ENCODE measurements at regions of chr1 and their contacts with region 1.

Region 1: DNA sequence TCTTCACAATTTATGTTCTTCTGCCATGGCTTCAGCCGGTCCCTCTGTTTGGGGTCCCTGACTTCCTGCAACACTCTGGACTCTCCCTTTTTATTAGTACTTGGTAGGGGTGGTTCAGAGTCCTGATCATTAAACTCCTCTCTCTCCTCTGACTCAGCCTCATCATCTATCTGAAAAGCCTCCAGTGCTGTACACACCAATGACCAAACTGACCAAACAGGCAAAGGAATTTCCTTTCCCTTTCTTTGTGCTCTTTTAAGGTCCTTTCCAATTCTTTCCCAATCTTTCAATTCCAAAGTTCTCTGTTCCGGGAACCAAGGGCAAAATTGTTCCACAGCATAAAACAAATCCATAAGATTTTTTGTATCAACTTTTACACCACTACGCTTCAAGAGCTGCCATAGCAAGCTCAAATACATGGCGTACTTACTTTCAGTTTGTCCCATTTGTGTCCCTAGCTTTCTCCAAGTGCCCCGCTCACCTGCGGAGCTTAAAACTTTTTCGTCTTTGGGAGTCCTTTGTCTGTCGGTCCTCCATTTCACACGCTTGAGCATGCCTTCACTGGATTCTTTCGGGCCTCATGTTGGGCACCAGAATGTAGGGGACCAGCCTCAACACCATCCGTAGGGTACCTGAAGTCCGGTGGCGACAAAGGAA is 9.6 kb downstream of the DAP3 start:
- DNase-seq: no peak
- ATAC-seq: no peak
- H3K4me3 ChIP-seq: no peak overlapping the region
- H3K4me3 Mint-ChIP-seq: no peak overlapping the region
- H3K27ac ChIP-seq: no peak overlapping the region
- H3K27ac Mint-ChIP-seq: no peak overlapping the region
- H3K4me1 ChIP-seq: peaks cover 0 to 8% of the 10 kb centered on the region in 2 experiments
- H3K4me1 Mint-ChIP-seq: peaks cover 62 to 66% (median 63%) of the 10 kb centered on the region in 3 donors
- H3K27me3 ChIP-seq: no peaks in the 10 kb centered on the region
- H3K27me3 Mint-ChIP-seq: no peaks in the 10 kb centered on the region

Region 2: DNA sequence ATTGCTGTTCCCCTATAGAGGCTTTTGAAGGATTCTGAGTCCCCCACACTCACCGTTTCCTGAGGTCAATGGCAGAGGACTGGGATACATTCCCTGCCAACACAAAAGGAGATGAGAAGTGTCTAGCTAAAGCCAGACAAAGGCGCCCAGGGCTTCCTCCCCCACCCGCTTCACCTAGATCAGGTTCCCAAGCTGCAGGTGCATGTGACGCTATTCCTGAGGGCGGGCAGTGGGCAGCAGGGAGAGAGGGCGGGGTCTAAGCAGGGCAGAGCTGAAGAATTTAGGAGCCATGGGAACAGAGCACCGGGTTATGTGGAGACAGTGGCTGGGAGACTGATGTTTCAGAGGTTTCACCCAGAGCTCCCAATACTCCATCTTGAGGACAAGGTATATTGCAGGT is 285.8 kb after region 1 on chr1:
- CTCF ChIA-PET with region 1: no interaction called
- POLR2A ChIA-PET with region 1: interaction called in 1 of 2 experiments, 11 read pairs
- DNase-seq: no peak
- ATAC-seq: no peak
- H3K4me3 ChIP-seq: no peak overlapping the region
- H3K4me3 Mint-ChIP-seq: no peak overlapping the region
- H3K27ac ChIP-seq: no peak overlapping the region
- H3K27ac Mint-ChIP-seq: peak overlapping the region in 1 of 2 donors; percentile 76
- H3K4me1 ChIP-seq: peaks cover 23 to 53% of the 10 kb centered on the region in 2 experiments
- H3K4me1 Mint-ChIP-seq: peaks cover 51 to 62% (median 55%) of the 10 kb centered on the region in 3 donors
- H3K27me3 ChIP-seq: no peaks in the 10 kb centered on the region
- H3K27me3 Mint-ChIP-seq: no peaks in the 10 kb centered on the region

Measured in T-cell (primary cell).